AG04449 (cell line): ENCODE measurements at regions of chr2 and their contacts with region 1.

Region 1: GRCh38 chr2:62456721-62457539 is 49.1 kb downstream of the TMEM17 start:
- DNase-seq: no peak
- H3K4me3 ChIP-seq: peak overlapping the region; percentile 61
- CTCF ChIP-seq: peak; percentile 94

Region 2: DNA sequence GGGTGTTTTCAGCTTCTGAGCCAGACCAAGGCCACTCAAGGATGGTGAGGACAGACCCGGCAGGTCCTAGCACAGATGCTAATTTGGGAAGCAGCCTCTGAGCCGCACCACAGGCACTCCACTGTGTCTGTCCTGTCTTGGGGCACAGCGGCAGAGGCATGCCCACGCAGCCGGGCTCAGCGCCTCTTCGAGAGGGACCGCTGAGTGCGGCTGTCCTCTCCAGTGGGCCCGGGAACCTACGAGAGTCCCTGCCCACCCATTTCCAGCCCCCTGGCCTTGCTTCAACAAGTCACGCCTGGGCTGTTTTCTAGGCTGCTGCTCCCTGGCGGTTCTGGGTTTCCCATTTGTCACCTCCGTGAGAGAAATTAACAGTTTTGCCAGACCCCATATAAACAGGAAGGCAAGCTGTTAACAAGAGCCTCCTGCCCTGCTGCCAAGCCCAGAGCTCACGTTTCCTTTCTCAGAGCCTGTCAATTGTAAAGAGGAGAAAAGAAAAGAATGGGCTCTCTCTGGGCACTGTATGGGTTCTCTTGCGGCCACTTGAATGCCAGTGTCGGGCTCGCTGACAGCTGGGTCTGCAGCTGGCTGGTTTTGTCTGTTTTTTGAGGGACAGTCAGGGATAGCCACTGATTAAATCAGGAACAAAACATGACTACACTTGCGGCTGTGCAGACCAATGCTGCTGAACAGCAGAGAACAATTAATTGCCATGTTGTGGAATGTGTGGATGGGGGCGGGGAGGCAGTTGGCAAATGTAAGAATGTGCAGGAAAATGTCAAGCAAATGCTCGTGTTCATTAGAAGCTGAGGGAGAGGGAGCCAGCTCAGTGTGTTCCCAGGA is 18.5 kb after region 1 on chr2:
- CTCF ChIA-PET with region 1: interaction called, 29 read pairs
- POLR2A ChIA-PET with region 1: no interaction called
- DNase-seq: no peak
- H3K4me3 ChIP-seq: no peak overlapping the region; the same call in 1 of the 2 replicates
- CTCF ChIP-seq: no peak

Region 3: DNA sequence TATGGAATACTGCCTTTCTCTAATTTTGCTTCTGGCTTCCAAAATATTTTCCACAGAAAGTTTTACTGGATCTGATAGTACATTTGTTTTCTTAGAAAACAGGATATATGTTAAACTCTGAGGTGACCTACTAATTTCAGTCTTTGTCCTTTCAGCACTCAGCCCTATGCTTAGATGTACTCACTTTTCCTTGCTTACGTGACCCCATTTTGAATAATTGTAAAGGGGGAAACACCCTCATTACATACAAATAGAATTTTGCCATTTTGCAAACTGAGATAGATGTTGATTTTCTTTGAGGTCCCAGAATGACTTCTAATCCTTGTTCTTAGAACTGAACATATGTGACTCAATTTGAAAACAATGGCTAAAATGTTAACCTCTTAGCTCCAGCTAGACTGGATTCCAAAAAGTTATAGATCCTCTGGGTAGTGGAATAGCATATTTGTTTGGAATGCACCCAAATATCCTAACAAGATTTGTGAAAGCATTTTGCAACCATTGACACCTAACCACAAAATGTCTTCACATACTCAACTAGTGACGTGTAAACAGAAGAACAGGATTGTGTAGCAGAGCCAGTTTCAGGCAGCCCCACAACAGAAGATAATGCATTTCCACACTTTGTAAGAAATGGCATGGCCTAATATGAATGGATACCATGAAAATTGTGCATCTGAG is 203.8 kb after region 1 on chr2:
- CTCF ChIA-PET with region 1: interaction called, 25 read pairs
- POLR2A ChIA-PET with region 1: interaction called, 5 read pairs
- DNase-seq: peak; percentile 94
- H3K4me3 ChIP-seq: no peak overlapping the region
- CTCF ChIP-seq: no peak

Region 4: DNA sequence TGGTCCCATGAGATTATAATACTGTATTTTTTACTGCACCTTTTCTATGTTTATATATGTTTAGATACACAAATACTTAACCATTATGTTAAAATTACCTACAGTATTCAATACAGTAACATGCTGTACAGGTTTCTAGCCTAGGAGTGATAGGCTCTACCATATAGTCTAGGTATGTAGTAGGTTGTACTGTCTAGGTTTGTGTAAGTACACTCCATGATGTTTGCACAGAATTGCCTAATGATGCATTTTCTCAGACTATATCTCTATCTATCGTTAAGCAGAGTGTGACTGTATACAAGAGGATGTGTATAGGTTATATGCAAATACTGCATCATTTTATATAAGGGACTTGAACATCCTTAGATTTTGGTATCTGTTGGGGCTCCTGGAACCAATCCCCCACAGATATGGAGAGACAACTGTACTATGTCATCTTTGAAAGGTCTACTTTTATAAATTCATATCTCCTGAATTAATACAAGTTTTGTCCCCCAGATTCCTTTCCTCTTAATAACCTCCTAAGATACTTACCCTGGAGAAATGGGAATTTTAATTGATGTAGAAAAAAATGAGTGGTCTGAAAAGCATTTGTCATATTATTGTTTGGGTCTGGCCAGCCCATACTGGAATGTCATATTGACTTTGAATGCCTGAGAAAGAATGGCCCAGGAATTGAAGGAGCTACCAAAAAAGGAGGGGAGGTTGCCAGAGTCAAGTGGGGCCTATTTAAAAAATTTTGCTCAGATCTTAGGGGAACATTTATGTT is 285.2 kb after region 1 on chr2:
- CTCF ChIA-PET with region 1: interaction called, 18 read pairs
- POLR2A ChIA-PET with region 1: no interaction called
- DNase-seq: no peak
- H3K4me3 ChIP-seq: no peak overlapping the region
- CTCF ChIP-seq: no peak

Region 5: DNA sequence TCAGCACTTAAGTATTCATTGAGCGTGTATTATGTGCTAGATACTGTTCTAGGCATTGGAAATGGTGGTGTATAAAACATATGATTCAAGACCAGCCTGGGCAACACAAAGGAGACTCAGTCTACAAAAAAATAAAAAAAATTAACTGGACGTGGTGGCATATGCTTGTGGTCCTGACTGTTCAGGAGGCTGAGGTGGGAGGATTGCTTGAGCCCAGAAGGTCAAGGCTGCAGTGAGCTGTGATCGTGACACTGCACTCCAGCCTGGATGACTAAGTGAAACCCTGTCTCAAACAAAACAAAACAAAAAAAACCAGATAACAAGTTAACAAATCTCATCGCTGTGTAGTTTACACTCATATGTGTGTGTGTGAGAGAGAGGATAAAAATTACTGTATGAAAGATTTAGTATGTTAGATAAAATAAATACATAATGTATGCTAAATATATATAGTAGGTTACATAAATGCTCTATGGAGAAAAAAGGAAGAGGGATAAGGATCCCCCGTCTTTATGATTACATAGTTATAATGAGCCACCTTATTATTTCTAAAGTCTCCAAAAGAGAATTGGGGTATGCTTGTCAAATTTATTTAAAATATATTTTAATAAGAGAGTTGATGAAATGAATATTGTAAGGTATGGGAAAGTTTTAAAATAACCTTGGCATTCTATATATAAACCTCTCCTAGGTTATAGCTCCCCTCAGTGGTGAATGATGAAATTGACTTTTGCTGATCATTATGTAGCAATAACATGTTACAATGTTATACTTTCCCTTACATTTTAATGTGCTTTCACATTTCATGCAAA is 317.8 kb after region 1 on chr2:
- CTCF ChIA-PET with region 1: interaction called, 196 read pairs
- POLR2A ChIA-PET with region 1: interaction called, 10 read pairs
- DNase-seq: no peak
- H3K4me3 ChIP-seq: no peak overlapping the region
- CTCF ChIP-seq: peak; percentile 33